Panc1 (cell line): ENCODE measurements at regions of chr11 and their contacts with region 1.

Region 1: DNA sequence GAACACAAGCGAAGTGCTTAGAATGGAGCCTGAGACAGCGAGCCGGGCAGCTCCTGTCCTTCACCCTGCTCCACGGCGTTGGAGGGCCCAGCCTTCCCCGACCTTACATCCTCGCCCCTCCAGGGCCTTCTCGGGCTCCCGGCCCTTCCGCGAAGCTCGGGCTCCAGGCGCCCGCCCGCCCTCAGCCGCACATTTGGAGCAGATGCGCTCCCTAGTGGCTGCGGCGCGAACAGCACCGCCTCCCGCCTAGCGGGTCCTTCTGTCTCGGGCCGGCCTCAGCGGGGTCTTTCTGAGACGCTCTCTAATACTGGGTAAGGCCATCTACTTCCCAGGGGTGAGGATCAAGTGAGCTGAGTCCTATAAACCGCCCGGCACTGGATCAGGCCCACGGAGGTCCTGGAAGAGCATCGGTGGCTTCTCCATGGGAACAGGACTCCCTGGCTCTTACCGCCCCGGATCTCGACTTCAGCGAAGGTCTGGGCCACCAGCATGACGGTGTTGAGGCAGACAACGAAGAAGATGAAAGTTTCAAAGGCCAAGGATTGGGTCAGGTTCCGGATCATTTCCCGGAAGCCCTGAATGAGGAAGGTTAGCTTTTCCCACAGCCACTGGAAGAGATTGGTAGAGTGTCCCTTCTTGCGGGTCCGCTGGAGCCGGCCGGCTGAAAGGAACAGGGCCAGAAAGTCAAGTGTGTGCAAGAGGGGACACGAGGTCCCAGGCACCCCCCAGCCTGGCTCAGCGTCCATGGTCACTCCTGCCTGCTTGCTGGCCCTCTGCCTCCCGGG is 3.7 kb downstream of the CATSPER1 start:
- DNase-seq: no peak
- ATAC-seq: peak; percentile 89
- H3K4me3 ChIP-seq: peak overlapping the region; percentile 25 to 51
- H3K27ac ChIP-seq: peak overlapping the region; percentile 55; the same call in 1 of the 2 replicates
- H3K4me1 ChIP-seq: peaks cover 12% of the 10 kb centered on the region; the same call in 1 of the 2 replicates
- H3K27me3 ChIP-seq: no peaks in the 10 kb centered on the region
- CTCF ChIP-seq: peak; percentile 100

Region 2: GRCh38 chr11:65833297-65834030 is 189.1 kb before region 1 on chr11 and contains the start of gene SNX32:
- CTCF ChIA-PET with region 1: no interaction called
- POLR2A ChIA-PET with region 1: no interaction called
- in situ Hi-C with region 1: no loop called
- intact Hi-C with region 1: no loop called
- DNase-seq: no peak
- ATAC-seq: peak; percentile 90
- H3K4me3 ChIP-seq: peak within 1 kb of the TSS; percentile 13 to 21; a peak in 3 of 4 replicates
- H3K27ac ChIP-seq: no peak within 1 kb of the TSS
- H3K4me1 ChIP-seq: no peaks in the 10 kb centered on the region
- H3K27me3 ChIP-seq: peaks cover 6% of the 10 kb centered on the region; the same call in 1 of the 2 replicates
- CTCF ChIP-seq: no peak
- total RNA-seq, gene SNX32: not detected

Region 3: DNA sequence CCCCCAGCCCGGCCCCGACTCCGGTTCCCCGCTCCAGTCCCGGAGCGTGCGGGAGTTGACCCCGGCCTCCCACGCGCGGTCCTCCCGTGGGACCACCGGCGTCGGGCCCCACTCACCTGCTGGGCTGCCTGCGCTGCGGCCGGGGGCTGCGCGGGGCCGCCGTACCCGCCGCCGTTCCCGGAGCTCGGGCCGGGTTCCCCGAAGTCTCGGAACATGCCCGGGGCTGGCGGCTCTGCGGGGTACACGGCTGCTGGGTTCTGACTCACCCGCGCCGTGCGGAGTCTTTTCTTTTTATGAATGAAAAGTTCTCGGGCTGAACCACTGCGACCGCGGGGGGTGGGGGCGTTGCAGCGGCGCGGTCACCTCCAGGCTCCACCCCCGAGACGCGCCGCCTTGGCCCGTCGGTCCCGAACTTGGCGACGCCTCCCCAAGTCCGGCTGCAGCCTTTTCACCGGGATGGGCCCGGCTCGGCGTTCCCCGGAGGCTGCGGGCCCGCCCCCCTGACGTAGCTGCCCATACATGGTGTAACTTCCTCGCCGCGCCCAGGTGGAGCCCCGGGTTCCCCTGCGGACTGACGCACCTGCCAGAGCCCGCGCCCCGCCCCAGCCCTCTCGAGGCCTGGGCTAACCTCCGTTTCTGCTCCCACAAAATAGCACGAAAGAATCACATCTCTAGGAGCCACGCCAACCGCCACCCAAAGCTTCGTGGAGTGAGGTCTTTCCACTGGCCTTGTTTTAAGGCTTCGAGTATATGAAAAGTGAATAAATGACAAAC is 122.3 kb before region 1 on chr11 and contains the start of gene FOSL1:
- CTCF ChIA-PET with region 1: no interaction called
- POLR2A ChIA-PET with region 1: interaction called, 16 read pairs
- in situ Hi-C with region 1: no loop called
- intact Hi-C with region 1: no loop called
- DNase-seq: no peak
- ATAC-seq: peak; percentile 69
- H3K4me3 ChIP-seq: peak within 1 kb of the TSS; percentile 82 to 89
- H3K27ac ChIP-seq: peak within 1 kb of the TSS; percentile 99
- H3K4me1 ChIP-seq: peaks cover 58% of the 10 kb centered on the region
- H3K27me3 ChIP-seq: no peaks in the 10 kb centered on the region
- CTCF ChIP-seq: no peak
- total RNA-seq, gene FOSL1: 186 TPM

Region 4: DNA sequence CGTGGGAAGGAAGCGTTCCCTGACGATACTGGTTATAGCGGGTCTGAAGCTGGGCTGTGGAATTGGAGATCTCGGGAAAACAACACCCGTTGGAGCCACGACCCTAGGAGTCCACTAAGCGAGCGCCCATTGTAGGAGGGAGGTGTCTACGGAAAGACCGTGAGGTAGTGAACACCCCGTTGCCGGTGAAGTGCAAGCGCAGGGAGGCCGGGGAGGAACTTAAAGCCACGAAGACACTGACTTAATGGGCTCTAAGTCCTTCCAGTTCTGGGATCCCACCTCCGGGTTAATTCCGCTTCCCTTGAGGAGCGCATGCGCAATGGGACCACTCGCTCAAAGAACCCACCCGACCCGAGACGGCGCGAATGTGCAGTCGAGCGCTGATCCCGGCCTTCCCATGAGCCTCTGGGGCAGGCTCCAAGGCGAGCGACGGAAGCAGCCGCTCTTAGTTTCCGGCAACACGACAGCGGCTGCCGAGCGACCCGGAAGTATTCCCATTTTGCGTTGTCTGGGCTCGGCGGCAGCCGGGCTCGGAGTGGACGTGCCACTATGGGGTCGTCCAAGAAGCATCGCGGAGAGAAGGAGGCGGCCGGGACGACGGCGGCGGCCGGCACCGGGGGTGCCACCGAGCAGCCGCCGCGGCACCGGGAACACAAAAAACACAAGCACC is 61.2 kb before region 1 on chr11 and contains the start of gene SART1:
- CTCF ChIA-PET with region 1: no interaction called
- POLR2A ChIA-PET with region 1: no interaction called
- in situ Hi-C with region 1: no loop called
- intact Hi-C with region 1: no loop called
- DNase-seq: peak; percentile 93
- ATAC-seq: peak; percentile 96
- H3K4me3 ChIP-seq: peak within 1 kb of the TSS; percentile 82 to 89
- H3K27ac ChIP-seq: peak within 1 kb of the TSS; percentile 99
- H3K4me1 ChIP-seq: peaks cover 11% of the 10 kb centered on the region
- H3K27me3 ChIP-seq: no peaks in the 10 kb centered on the region
- CTCF ChIP-seq: no peak
- total RNA-seq, gene SART1: 76.4 TPM

Region 5: DNA sequence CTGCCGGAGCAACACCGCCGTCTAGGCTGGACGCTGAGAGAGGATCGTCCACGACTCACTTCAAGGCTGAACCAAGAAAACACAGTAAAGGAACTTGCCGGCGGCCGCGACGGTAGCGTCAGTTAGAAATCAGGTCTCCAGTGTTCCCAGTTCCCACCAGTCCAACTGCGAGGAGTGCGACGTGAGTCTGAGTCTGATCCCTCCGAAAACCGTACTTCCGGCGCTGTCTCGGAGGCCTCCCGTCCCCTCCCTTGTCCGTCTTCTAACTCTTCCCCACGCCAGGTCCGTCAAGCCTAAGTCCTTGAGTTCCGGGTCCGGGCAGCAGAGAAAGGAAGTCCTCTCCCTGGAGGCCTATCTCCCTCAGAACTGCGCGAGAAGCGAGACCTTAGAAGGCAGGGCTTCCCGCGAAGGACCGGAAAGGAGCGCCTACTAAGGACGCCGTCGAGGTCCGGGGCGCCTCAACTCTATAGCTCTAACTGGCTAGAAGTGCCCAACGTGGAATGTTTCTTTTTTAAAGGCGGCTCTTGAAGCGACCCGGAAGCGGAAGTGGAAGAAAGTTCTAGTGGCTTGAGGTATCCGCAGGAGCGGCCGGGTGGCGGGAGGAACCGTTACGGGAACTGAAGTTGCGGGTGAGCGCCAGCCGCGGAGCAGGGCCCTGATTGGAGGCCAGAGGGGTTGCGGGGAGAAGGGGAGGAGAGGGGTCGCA is 20.5 kb before region 1 on chr11 and contains the starts of genes BANF1 and EIF1AD:
- CTCF ChIA-PET with region 1: interaction called, 10 read pairs
- POLR2A ChIA-PET with region 1: no interaction called
- in situ Hi-C with region 1: no loop called
- intact Hi-C with region 1: no loop called
- DNase-seq: peak; percentile 96
- ATAC-seq: peak; percentile 90
- H3K4me3 ChIP-seq: peak within 1 kb of the TSS; percentile 63 to 100
- H3K27ac ChIP-seq: peak within 1 kb of the TSS; percentile 100
- H3K4me1 ChIP-seq: peaks cover 43% of the 10 kb centered on the region
- H3K27me3 ChIP-seq: no peaks in the 10 kb centered on the region
- CTCF ChIP-seq: no peak
- total RNA-seq, gene BANF1: 494 TPM
- total RNA-seq, gene EIF1AD: 64.6 TPM